RWPE1 (cell line): ENCODE measurements at regions of chr16 and their contacts with region 1.

Region 1: GRCh38 chr16:10906914-10907756 is 30.1 kb downstream of the CIITA start:
- DNase-seq: no peak
- H3K27ac ChIP-seq: no peak overlapping the region
- CTCF ChIP-seq: no peak

Region 2: GRCh38 chr16:10918294-10919002 is 11.3 kb after region 1 on chr16:
- CTCF ChIA-PET with region 1: interaction called, 17 read pairs
- POLR2A ChIA-PET with region 1: no interaction called
- DNase-seq: peak; percentile 76
- H3K27ac ChIP-seq: no peak overlapping the region
- CTCF ChIP-seq: peak; percentile 95

Region 3: GRCh38 chr16:12111223-12111622 is 1204.1 kb after region 1 on chr16:
- CTCF ChIA-PET with region 1: no interaction called
- POLR2A ChIA-PET with region 1: no interaction called
- DNase-seq: no peak
- H3K27ac ChIP-seq: no peak overlapping the region
- CTCF ChIP-seq: no peak